Right ventricle myocardium inferior (tissue), 1 donor: ENCODE measurements at regions of chr2 and their contacts with region 1.

Region 1: DNA sequence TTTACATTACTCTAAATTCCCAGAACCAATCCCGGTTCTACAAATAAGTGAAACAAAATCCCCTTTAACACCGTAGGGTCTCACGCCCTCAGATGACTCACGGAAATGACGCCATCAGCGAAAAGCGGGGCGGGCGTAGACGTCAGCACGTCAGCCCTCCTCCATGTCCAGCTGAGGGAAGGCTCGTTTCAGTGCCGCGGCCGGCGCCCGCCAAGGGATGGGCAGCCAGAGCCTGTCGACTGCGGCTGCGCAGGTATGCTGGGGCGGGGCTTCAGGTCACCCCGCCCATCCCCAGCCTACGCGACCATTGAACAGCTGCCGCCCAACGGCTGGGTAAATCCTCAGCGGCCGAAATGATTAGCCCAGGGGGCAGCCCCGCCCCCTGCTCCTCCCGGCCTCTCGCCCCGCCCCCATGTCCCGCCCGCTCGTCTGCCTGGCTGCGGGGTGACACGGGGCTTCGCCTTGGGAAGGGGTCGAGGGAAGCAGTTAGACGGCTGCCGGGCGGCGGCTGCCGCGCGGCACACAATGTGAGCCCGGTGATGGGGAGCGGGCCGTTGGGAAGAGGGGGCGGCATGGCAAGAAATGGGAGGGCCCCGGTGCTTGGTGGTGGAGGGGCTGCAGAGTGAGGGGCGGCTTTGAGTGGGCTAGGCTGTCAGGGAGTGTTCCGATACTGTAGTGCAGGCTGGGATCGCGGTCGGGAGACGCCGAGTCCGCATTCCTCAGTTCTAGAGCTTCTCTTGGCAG is at the start of gene NBEAL1:
- DNase-seq: peak; percentile 99
- ATAC-seq: peak; percentile 99
- total RNA-seq, gene NBEAL1: 14.1 TPM

Region 2: GRCh38 chr2:202634556-202635427 is 379.8 kb before region 1 on chr2 and contains the start of gene FAM117B:
- intact Hi-C with region 1: loop called (anchors 10 kb)
- DNase-seq: peak; percentile 100
- ATAC-seq: peak; percentile 99
- total RNA-seq, gene FAM117B: 2.4 TPM

Region 3: DNA sequence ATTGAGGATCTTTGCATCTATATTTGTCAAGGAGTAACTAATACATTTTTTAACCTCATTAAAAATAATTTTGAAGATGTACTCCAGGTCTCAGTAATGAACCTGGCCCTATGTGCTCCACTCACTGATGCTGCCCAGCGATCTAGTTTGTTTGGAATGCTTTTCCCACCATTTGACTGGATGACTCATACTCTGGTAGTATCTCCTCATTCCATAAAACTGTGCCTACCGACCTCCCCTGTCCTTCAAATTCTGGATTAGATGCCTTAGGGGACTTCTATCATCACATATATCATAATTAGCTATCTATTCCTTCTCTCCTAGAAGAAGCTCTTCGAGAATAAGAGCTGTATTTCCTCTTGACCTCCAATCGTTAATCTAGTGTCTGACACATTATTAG is 296.0 kb before region 1 on chr2:
- intact Hi-C with region 1: no loop called
- DNase-seq: no peak
- ATAC-seq: no peak

Region 4: GRCh38 chr2:202911512-202912341 is 102.9 kb before region 1 on chr2 and contains the starts of genes CARF and WDR12:
- intact Hi-C with region 1: loop called (anchors 5 kb)
- DNase-seq: peak; percentile 97
- ATAC-seq: peak; percentile 99
- total RNA-seq, gene CARF: 5.2 TPM
- total RNA-seq, gene WDR12: 54.1 TPM